Heart right ventricle (tissue), 16 donors: ENCODE measurements at regions of chr18 and their contacts with region 1.

Region 1: GRCh38 chr18:6269660-6270332 is 144.9 kb downstream of the L3MBTL4 start:
- DNase-seq: no peak
- ATAC-seq: no peak
- H3K4me3 ChIP-seq: no peak overlapping the region
- H3K27ac ChIP-seq: no peak overlapping the region
- H3K4me1 ChIP-seq: no peaks in the 10 kb centered on the region
- H3K27me3 ChIP-seq: peaks cover 0 to 9% (median 0%) of the 10 kb centered on the region in 7 donors
- CTCF ChIP-seq: no peak

Region 2: GRCh38 chr18:6109743-6110142 is 160.1 kb before region 1 on chr18:
- intact Hi-C with region 1: no loop called
- DNase-seq: no peak
- ATAC-seq: peak in 3 of 8 donors; percentile 55 to 74 (median 59)
- H3K4me3 ChIP-seq: no peak overlapping the region
- H3K27ac ChIP-seq: no peak overlapping the region
- H3K4me1 ChIP-seq: peaks cover 0 to 4% (median 0%) of the 10 kb centered on the region in 9 donors
- H3K27me3 ChIP-seq: no peaks in the 10 kb centered on the region
- CTCF ChIP-seq: no peak

Region 3: DNA sequence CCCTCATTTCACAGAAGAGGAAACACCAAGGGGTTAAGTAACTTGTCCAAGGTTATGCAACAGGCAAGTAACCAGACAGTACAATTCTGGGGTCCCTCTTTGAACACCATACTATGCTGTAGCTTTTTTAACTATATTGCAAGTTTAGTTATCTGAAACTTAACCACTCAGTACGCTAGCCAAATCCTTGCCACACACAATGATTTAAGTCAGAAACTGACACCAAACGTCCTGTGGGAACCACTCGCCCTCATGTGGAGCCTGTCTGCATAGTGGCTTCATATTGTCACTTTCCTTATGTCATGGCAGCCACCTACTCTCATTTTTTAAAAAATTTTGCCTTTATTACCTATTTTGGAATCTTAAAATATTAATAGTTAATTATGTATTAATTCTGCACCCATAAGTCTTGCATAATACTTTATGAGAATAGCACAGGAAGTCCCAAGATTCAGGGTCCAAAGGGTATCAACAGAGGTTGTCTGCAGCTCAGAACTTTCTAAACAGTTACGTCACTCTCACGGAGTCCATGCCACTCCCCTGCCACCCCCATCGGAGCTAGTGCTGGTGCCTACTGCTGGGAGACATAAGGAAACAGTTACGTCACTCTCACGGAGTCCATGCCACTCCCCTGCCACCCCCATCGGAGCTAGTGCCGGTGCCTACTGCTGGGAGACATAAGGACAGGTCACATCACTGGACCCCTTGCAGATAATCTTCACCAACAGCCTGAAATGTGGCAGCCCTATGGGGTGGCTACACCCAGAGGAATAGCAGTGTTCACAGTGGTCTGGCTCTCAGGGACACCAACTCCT is 45.9 kb after region 1 on chr18:
- intact Hi-C with region 1: loop called in 1 of 10 experiments (anchors 5 kb)
- DNase-seq: no peak
- ATAC-seq: no peak
- H3K4me3 ChIP-seq: peak overlapping the region in 1 of 10 donors; percentile 19
- H3K27ac ChIP-seq: no peak overlapping the region
- H3K4me1 ChIP-seq: no peaks in the 10 kb centered on the region
- H3K27me3 ChIP-seq: no peaks in the 10 kb centered on the region
- CTCF ChIP-seq: no peak